IMR-90 (cell line): ENCODE measurements at regions of chr11 and their contacts with region 1.

Region 1: GRCh38 chr11:115134926-115135325 is 369.3 kb downstream of the CADM1 start:
- DNase-seq: no peak
- ATAC-seq: no peak
- H3K4me3 ChIP-seq: no peak overlapping the region
- H3K27ac ChIP-seq: no peak overlapping the region
- H3K4me1 ChIP-seq: no peaks in the 10 kb centered on the region
- H3K27me3 ChIP-seq: peaks cover 20% of the 10 kb centered on the region; the same call in 1 of the 2 replicates
- CTCF ChIP-seq: no peak
- POLR2A ChIP-seq: no peak
- RAD21 ChIP-seq: no peak

Region 2: GRCh38 chr11:115104851-115105453 is 30.0 kb before region 1 on chr11:
- CTCF ChIA-PET with region 1: no interaction called
- POLR2A ChIA-PET with region 1: interaction called, 10 read pairs
- dilution Hi-C with region 1: no loop called
- in situ Hi-C with region 1: no loop called
- intact Hi-C with region 1: no loop called
- DNase-seq: no peak
- ATAC-seq: no peak
- H3K4me3 ChIP-seq: no peak overlapping the region
- H3K27ac ChIP-seq: no peak overlapping the region
- H3K4me1 ChIP-seq: no peaks in the 10 kb centered on the region
- H3K27me3 ChIP-seq: no peaks in the 10 kb centered on the region; the same call in 1 of the 2 replicates
- CTCF ChIP-seq: no peak
- POLR2A ChIP-seq: no peak
- RAD21 ChIP-seq: no peak

Region 3: DNA sequence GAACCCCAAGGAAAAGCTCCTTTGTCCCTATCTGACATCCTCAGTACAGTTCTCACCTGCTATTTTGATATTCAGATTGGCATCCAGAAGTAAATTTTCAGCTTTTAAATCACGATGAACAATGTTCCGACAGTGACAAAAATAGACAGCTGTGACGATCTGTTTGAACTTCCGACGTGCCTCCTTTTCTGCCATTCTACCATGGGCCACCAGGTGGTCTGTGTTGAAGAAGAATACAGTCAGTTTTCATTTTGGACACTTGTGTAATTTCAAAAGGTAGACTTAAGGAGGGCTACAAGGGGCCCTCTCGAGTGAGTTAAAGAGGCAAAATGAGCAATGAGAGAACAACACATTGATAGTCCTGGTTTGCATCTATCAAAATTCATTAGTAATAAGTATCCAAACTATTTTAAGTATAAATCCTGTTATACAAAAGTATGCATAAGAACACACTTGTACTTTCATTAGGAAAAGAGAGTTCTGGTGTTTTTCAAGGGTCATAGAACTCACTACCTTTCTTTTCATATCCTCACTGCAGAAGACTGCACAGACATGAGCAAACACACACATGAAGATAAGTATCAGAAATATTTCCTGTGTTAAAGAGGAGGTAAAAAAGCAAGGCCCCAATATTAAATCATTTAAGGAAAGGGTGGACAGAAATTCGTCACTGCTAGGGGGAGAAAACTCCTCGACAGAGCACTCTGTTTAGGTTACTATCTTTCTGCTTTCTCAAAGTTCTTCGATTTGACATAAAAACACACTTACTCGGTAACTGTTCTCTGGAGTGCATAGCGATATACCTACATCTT is 1792.4 kb after region 1 on chr11:
- CTCF ChIA-PET with region 1: no interaction called
- POLR2A ChIA-PET with region 1: interaction called, 26 read pairs
- dilution Hi-C with region 1: no loop called
- in situ Hi-C with region 1: no loop called
- intact Hi-C with region 1: no loop called
- DNase-seq: no peak
- ATAC-seq: no peak
- H3K4me3 ChIP-seq: no peak overlapping the region
- H3K27ac ChIP-seq: no peak overlapping the region
- H3K4me1 ChIP-seq: peaks cover 13% of the 10 kb centered on the region
- H3K27me3 ChIP-seq: no peaks in the 10 kb centered on the region
- CTCF ChIP-seq: 0 out of 2 replicates have a peak, but pooled peaks have one; percentile 15
- POLR2A ChIP-seq: no peak
- RAD21 ChIP-seq: peak; percentile 16; the same call in 1 of the 2 replicates